ENCODE measurements at regions of chr2 and their contacts with region 1.

Region 1: DNA sequence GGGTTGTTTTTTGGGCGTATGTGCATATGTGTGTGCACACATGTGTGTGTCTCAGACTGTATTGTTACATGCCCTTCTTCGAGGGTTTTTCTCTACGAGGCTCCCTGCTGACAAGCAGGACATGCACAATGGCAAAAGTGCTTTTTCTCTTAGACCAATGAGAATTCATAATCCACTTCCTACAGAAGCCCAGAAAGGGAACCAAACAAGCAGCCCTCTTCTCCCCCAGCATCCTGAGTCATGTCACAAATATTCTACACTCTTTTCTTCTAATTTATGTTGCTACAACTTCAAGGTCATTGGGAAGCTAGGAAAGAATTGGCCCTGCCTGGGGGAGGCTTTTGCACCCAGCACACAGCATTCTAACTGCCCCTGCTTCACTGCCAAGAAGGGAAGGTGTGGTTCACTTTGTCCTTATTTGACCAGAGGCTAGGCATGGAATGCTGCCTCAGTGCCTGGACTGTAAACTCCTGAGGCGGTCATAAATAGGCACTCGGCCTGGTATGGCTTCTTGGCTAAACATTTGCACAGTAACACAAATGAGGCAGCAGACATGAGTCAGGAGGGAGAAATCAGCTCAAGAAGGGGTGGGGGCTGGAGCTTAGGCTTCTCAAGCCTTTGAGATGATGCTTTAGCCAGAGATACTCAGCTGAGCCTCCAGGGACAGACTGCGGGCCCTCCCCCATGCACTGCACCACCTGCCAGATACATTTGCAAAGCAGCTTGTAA is 92.7 kb upstream of the KLF7 start:
- DNase-seq: peak; percentile 100
- H3K4me3 ChIP-seq: no peak overlapping the region
- H3K27me3 ChIP-seq: no peaks in the 10 kb centered on the region
- CTCF ChIP-seq: peak; percentile 30; the same call in 1 of the 2 replicates

Region 2: DNA sequence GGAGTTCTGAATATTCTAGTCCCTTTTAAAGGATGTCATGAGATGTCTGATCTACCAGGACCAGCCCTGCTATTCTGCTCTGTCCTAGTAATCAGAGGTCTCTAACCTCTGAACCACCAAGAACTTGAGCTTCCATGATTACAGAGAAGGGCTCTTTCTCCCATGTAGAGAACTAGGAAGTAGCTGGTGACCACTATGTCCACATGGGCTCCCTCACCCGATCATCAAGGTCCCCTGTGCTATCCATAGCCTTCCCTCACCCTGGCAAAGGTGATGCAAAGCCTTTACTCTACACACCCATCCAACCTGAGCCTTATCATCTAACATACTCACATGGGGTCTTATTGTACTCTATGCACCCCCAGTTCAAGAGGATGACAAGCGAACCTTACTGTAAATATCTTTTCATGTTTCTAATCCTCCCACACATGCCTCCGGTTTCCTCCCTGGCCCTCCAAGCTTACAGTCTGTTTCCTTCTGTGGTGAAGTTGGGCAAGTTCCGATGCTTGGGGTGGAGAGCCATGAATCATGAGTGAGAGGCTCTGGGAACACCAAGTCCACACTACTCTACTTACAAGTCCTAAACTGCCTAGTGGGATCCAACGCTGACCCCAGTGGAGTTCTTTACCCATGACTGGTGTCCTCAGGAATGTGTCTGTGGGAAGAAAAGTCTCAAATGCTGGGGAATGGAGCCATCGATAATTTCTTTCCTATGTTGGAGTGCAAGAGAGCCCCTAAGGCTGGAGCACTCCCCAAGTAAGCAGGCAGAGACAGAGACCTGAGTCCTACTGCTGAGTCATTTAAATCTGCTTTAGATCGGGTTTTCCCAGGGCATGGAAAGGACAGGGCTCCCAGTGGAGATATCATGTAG is 19.4 kb before region 1 on chr2:
- CTCF ChIA-PET with region 1: interaction called, 3 read pairs
- POLR2A ChIA-PET with region 1: interaction called, 10 read pairs
- DNase-seq: peak; percentile 100
- H3K4me3 ChIP-seq: no peak overlapping the region
- H3K27me3 ChIP-seq: no peaks in the 10 kb centered on the region
- CTCF ChIP-seq: 0 out of 2 replicates have a peak, but pooled peaks have one; percentile 1